Activated CD4-positive, alpha-beta T cell treated with anti-CD3 and anti-CD28 coated beads, Interleukin-2, amount 10 ng/mL, durations not matched to agents 24 days and 14 days (primary cell): ENCODE measurements at regions of chr12 and their contacts with region 1.

Region 1: DNA sequence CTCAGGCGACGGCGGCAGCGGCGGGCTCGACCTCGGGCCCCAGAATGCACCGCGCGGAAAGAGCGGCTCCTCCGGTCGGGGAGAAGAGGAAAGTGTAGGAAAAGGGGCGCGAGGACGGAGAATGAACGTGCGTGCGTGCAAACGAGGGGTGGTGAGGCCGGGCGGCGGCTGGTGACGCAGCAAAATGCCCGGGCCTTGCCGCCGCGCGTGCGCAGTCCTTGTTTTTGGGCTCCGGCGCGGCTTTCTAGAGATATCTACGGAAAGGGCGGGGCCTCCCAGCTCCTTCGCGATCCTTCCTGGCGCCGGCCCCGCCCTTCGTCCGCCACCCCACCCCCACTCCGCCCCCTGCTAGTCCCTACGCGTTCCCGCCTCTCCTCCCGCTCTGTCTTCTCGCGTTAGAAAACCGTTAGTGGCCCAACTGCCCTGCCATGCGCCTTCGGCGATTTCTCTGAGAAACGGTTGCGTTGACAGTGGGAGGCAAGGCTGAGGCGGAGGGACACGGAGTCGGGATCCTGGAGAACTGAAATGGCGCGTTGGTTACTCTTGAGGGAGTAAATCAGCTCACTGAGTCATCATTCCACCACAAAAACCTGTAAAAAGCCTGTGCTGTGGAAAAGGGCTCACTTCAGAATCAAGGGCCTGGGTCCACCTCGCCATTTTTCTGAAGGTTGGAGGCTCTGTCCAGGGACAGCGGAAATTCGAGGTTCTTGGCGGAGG is at the start of gene PTGES3:
- DNase-seq: peak; percentile 99
- H3K4me3 Mint-ChIP-seq: peak within 1 kb of the TSS; percentile 99
- H3K27ac Mint-ChIP-seq: peak within 1 kb of the TSS; percentile 97
- H3K4me1 Mint-ChIP-seq: peaks cover 24% of the 10 kb centered on the region
- H3K27me3 Mint-ChIP-seq: no peaks in the 10 kb centered on the region
- total RNA-seq, gene PTGES3: 351 and 357 TPM in 2 replicates

Region 2: DNA sequence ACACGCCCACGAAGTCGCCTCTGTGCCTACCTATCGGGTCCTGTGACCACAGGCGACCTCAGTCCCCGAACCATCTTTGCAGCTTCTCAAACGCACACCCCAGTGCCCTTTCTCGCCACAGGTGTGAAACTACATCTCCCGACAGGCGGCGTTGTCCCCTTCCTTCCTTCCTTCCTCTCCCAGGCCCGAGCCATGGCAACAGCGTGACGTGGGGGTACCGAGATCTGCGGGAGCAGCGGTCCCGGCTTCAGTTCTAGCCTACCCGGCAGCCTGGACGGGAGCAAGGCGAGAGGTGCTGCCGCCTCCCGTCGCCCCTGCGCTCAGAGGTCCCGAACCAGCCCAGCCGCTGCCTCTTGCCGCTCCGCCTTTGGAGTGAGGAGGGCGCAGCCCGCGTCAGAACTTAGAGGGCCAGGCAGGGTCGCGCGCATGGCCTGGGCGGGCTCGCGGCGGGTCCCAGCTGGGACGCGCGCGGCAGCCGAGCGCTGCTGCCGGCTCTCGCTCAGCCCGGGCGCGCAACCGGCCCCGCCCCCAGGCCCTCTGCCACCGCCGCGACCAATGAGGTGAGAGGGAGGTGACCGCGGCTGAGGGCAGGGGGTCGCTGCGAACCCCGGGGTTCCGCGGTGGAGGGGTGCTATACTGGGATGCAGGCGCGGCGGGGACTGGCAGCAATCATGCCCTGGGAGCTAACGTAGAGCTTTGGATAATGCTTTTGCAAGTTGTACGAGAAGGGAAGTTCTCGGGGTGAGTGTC is 421.4 kb before region 1 on chr12 and contains the start of gene COQ10A:
- intact Hi-C with region 1: no loop called
- DNase-seq: peak; percentile 96
- H3K4me3 Mint-ChIP-seq: peak within 1 kb of the TSS; percentile 93
- H3K27ac Mint-ChIP-seq: peak within 1 kb of the TSS; percentile 94
- H3K4me1 Mint-ChIP-seq: peaks cover 14% of the 10 kb centered on the region
- H3K27me3 Mint-ChIP-seq: no peaks in the 10 kb centered on the region
- total RNA-seq, gene COQ10A: 17.0 TPM in 2 replicates

Region 3: GRCh38 chr12:56601503-56601902 is 86.8 kb before region 1 on chr12:
- intact Hi-C with region 1: no loop called
- DNase-seq: peak; percentile 73
- H3K4me3 Mint-ChIP-seq: no peak overlapping the region
- H3K27ac Mint-ChIP-seq: no peak overlapping the region
- H3K4me1 Mint-ChIP-seq: no peaks in the 10 kb centered on the region
- H3K27me3 Mint-ChIP-seq: no peaks in the 10 kb centered on the region

Region 4: GRCh38 chr12:56645717-56646446 is 42.4 kb before region 1 on chr12 and contains the start of gene ATP5F1B:
- intact Hi-C with region 1: loop called (anchors 1 kb)
- DNase-seq: peak; percentile 97
- H3K4me3 Mint-ChIP-seq: peak within 1 kb of the TSS; percentile 85
- H3K27ac Mint-ChIP-seq: peak within 1 kb of the TSS; percentile 97
- H3K4me1 Mint-ChIP-seq: peaks cover 18% of the 10 kb centered on the region
- H3K27me3 Mint-ChIP-seq: no peaks in the 10 kb centered on the region
- total RNA-seq, gene ATP5F1B: 760 and 771 TPM in 2 replicates

Region 5: GRCh38 chr12:56724972-56725722 is 36.9 kb after region 1 on chr12 and contains the start of gene NACA:
- intact Hi-C with region 1: loop called (anchors 1 kb)
- DNase-seq: peak; percentile 99
- H3K4me3 Mint-ChIP-seq: peak within 1 kb of the TSS; percentile 99
- H3K27ac Mint-ChIP-seq: peak within 1 kb of the TSS; percentile 100
- H3K4me1 Mint-ChIP-seq: peaks cover 43% of the 10 kb centered on the region
- H3K27me3 Mint-ChIP-seq: no peaks in the 10 kb centered on the region
- total RNA-seq, gene NACA: 1,041 and 1,057 TPM in 2 replicates

Region 6: DNA sequence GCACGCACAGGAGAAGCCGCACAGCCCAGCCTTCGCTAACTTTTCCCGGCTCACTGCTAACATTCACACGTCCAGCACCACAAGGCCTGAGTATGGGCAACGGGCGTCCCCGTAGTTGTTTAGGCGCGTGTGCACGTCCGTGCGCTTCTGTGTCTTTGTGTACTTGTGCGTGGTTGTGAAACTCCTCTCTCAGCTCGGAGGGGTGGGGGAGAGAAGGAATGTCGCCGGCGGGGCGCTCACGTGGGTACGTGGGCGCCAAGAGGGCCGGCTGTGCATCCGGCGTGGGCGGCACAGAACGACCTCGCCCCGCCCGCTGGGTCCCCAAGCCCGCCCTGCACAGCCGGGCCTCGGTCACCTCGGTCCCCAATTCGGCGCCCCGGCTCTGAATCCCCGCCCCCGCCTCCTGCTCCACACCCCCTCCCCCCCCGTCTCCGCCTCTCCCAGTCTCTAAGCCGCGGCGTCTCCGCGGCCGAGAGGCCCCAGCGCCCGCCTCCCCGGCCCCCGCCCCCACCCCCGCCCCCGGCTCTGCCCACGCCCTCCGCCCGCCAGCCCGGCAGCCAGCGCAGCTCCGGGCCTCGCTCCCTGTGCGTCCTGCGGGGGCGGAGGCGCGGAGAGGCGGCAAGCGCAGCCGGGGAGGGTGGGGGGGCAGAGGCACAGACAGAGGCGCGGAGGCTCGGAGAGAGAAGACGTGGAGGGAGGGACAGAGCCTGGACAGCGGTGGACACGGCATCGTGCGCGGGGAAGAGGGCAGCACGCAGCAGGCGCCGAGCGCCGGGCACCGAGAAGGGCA is 400.4 kb after region 1 on chr12 and contains the start of gene NAB2:
- intact Hi-C with region 1: loop called (anchors 2 kb)
- DNase-seq: peak; percentile 98
- H3K4me3 Mint-ChIP-seq: peak within 1 kb of the TSS; percentile 96
- H3K27ac Mint-ChIP-seq: peak within 1 kb of the TSS; percentile 97
- H3K4me1 Mint-ChIP-seq: peaks cover 68% of the 10 kb centered on the region
- H3K27me3 Mint-ChIP-seq: no peaks in the 10 kb centered on the region
- total RNA-seq, gene NAB2: 70.5 and 76.7 TPM in 2 replicates